Lower lobe of right lung (tissue), 2 donors: ENCODE measurements at regions of chr5 and their contacts with region 1.

Region 1: GRCh38 chr5:147628058-147628895 is 118.4 kb upstream of the DPYSL3 start:
- DNase-seq: no peak
- ATAC-seq: peak; percentile 86 to 90
- H3K4me3 ChIP-seq: no peak overlapping the region
- H3K27ac ChIP-seq: no peak overlapping the region
- H3K4me1 ChIP-seq: no peaks in the 10 kb centered on the region
- H3K27me3 ChIP-seq: no peaks in the 10 kb centered on the region
- CTCF ChIP-seq: peak; percentile 70

Region 2: GRCh38 chr5:147504011-147504410 is 124.3 kb before region 1 on chr5:
- intact Hi-C with region 1: no loop called
- DNase-seq: no peak
- ATAC-seq: no peak
- H3K4me3 ChIP-seq: no peak overlapping the region
- H3K27ac ChIP-seq: no peak overlapping the region
- H3K4me1 ChIP-seq: peaks cover 8% of the 10 kb centered on the region
- H3K27me3 ChIP-seq: peaks cover under 1% of the 10 kb centered on the region
- CTCF ChIP-seq: no peak

Region 3: GRCh38 chr5:147763791-147764525 is 135.7 kb after region 1 on chr5:
- intact Hi-C with region 1: no loop called
- DNase-seq: no peak
- ATAC-seq: peak; percentile 68 to 74
- H3K4me3 ChIP-seq: no peak overlapping the region
- H3K27ac ChIP-seq: no peak overlapping the region
- H3K4me1 ChIP-seq: no peaks in the 10 kb centered on the region
- H3K27me3 ChIP-seq: no peaks in the 10 kb centered on the region
- CTCF ChIP-seq: no peak

Region 4: DNA sequence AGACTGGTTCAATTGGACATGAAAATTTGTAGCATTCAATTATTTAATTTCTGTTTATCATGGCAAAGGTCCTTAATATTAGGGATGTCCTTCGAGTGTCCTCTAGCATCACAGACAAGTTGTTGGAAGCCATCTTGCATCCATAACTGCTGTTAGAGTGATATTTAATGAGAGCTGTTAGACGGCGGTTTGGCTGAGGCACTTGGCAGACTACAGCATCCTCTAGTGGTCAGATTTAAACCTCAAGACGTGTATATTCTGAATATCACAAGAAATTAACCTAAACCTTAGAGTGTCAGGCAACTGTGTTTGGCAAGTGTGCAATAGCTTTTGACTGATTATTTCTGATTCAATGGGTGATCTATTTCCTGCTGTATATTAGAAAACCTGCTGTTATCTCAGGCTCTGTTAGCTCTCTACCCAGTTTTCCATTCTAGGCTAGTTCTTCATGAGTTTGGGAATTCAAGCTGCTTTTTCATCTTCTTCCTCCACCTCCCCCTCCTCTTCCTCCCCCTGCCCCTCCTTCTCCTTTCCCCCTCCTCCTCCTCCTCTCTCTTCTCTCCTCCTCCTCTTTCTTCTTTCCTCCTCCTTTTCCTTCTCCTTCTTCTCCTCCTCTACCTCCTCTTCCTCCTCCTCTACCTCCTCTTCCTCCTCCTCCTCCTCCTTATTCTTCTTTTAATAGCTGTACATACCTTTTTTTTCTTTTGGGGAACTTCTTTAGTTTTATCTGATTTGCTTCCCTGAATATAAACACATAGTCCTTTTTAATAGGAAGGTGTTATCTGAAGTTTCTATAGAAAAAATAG is 194.6 kb after region 1 on chr5:
- intact Hi-C with region 1: loop called (anchors 2 kb)
- DNase-seq: no peak
- ATAC-seq: peak; percentile 90 to 92
- H3K4me3 ChIP-seq: no peak overlapping the region
- H3K27ac ChIP-seq: no peak overlapping the region
- H3K4me1 ChIP-seq: no peaks in the 10 kb centered on the region
- H3K27me3 ChIP-seq: no peaks in the 10 kb centered on the region
- CTCF ChIP-seq: peak; percentile 80